ENCODE measurements at regions of chr9 and their contacts with region 1.

Region 1: DNA sequence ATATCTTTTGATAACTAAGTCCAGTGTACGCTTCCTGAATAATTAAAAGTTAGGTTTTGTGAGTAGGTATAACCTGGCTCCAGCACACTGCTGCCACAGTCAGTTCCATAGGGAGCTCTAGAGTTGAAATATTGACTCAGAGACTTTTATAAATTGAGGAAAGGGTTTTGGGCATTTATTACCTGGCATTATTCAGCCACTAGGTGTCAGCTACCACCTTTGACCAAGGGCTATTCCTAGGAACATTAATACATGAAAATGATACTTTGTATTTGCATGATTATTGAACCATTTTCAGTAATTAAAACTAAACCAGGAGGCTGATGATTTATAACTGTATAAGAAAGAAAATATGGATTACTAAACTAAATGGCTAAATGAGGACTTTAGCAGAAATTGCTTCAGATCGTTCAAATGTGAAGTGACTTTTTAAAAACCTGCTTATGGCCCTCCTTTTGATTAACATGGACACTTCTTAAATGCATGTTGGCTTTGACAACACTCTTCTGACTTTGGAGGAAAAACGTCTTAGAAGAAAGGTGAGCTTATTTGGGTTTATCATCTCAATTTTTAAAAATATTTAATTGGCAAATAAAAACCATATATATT is 83.0 kb downstream of the SMC2 start:
- DNase-seq: peak in 1 of 2 experiments; percentile 21
- ATAC-seq: peak; percentile 47 to 69; a peak in 3 of 6 replicates
- H3K4me3 ChIP-seq: no peak overlapping the region
- H3K27ac ChIP-seq: no peak overlapping the region
- H3K4me1 ChIP-seq: no peaks in the 10 kb centered on the region
- CTCF ChIP-seq: peak; percentile 63
- EP300 ChIP-seq: no peak
- POLR2A ChIP-seq: no peak
- RAD21 ChIP-seq: peak; percentile 73 to 75

Region 2: GRCh38 chr9:104386425-104387069 is 209.4 kb after region 1 on chr9:
- CTCF ChIA-PET with region 1: interaction called, 36 read pairs
- POLR2A ChIA-PET with region 1: no interaction called
- DNase-seq: peak; percentile 23 to 58
- ATAC-seq: peak; percentile 82 to 93
- H3K4me3 ChIP-seq: no peak overlapping the region
- H3K27ac ChIP-seq: no peak overlapping the region
- H3K4me1 ChIP-seq: no peaks in the 10 kb centered on the region
- CTCF ChIP-seq: peak; percentile 73
- EP300 ChIP-seq: no peak
- POLR2A ChIP-seq: no peak
- RAD21 ChIP-seq: peak; percentile 81